Natural killer cell (primary cell): ENCODE measurements at regions of chr1 and their contacts with region 1.

Region 1: DNA sequence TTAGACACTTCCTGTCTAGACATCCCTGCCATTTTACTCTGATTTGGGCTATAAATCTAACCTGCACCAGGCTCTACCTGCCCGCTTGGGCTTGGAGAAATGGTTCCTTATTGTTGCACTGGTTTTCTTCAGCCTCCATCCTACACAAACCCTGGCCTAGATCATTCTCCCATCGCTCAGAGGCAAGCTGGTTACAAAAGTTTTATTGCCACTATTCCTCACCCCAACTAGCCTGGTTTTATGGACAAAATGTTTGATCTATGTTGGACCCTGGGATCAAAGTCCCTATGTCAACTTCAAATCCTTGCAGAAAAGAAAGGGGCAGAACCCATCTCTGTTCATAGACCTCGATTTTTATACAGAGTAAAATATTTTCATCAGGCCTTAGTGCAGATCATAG is 31.5 kb upstream of the MTF2 start:
- DNase-seq: no peak
- ATAC-seq: no peak
- H3K4me3 ChIP-seq: no peak overlapping the region
- H3K4me3 Mint-ChIP-seq: no peak overlapping the region
- H3K27ac ChIP-seq: no peak overlapping the region
- H3K27ac Mint-ChIP-seq: no peak overlapping the region
- H3K4me1 ChIP-seq: peaks cover 5% of the 10 kb centered on the region
- H3K4me1 Mint-ChIP-seq: peaks cover 2 to 3% of the 10 kb centered on the region in 2 donors
- H3K27me3 ChIP-seq: no peaks in the 10 kb centered on the region
- H3K27me3 Mint-ChIP-seq: peaks cover 0 to 3% of the 10 kb centered on the region in 2 donors
- CTCF ChIP-seq: no peak

Region 2: DNA sequence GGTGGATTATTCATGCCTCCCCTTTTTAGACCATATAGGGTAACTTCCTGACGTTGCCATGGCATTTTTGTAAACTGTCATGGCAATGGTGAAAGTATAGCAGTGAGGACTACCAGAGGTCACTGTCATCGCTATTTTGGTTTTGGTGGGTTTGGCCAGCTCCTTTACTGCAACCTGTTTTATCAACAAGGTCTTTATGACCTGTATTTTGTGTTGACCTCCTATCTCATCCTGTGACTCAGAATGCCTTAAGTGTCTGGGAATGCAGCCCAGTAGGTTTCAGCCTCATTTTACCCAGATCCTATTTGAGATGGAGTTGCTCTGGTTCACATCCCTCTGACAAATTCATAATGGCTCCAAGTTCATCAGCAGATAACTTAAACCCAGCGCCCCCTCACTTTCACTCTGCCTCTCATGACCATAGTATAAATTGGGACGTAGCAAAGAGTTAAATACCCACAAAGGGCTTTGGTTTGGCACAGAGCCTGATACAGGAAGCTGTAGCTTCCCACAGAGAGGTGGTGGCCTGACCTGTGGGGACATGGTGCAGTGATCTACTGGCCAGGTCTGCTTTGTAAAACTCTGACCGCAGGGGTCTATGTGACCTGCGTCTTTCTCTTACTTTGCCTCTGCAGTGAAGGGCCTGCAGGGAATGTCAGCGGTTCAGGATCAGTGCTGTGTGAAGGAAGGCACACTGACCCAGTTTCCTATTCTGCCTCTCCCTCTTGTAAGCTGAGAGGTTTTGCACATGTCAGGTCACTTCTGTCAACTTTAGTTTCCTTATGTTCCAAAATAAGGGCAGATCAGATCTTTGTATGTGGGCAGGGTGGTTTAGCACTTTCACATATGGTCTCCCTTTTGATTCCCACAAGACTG is 1947.6 kb before region 1 on chr1:
- intact Hi-C with region 1: loop called (anchors 5 kb)
- DNase-seq: peak; percentile 24 to 31
- ATAC-seq: peak; percentile 67 to 86 (median 69)
- H3K4me3 ChIP-seq: no peak overlapping the region
- H3K4me3 Mint-ChIP-seq: peak overlapping the region; percentile 77
- H3K27ac ChIP-seq: peak overlapping the region; percentile 18
- H3K27ac Mint-ChIP-seq: peak overlapping the region; percentile 43 to 76
- H3K4me1 ChIP-seq: peaks cover 21% of the 10 kb centered on the region
- H3K4me1 Mint-ChIP-seq: peaks cover 31 to 33% of the 10 kb centered on the region in 2 donors
- H3K27me3 ChIP-seq: peaks cover 13% of the 10 kb centered on the region
- H3K27me3 Mint-ChIP-seq: peaks cover 59 to 65% of the 10 kb centered on the region in 2 donors
- CTCF ChIP-seq: no peak